Endothelial cell of umbilical vein (primary cell): ENCODE measurements at regions of chr20 and their contacts with region 1.

Region 1: GRCh38 chr20:45904583-45905504 is 7.1 kb downstream of the PLTP start:
- DNase-seq: no peak
- H3K4me3 ChIP-seq: no peak overlapping the region
- H3K27ac ChIP-seq: no peak overlapping the region
- H3K4me1 ChIP-seq: peaks cover under 1% of the 10 kb centered on the region
- H3K27me3 ChIP-seq: no peaks in the 10 kb centered on the region
- CTCF ChIP-seq: no peak
- POLR2A ChIP-seq: no peak

Region 2: GRCh38 chr20:45427236-45428149 is 477.4 kb before region 1 on chr20:
- CTCF ChIA-PET with region 1: no interaction called
- POLR2A ChIA-PET with region 1: no interaction called
- dilution Hi-C with region 1: no loop called
- intact Hi-C with region 1: no loop called
- DNase-seq: no peak
- H3K4me3 ChIP-seq: no peak overlapping the region
- H3K27ac ChIP-seq: no peak overlapping the region
- H3K4me1 ChIP-seq: peaks cover 3% of the 10 kb centered on the region
- H3K27me3 ChIP-seq: no peaks in the 10 kb centered on the region
- CTCF ChIP-seq: no peak
- POLR2A ChIP-seq: no peak

Region 3: GRCh38 chr20:45867819-45868176 is 37.0 kb before region 1 on chr20:
- CTCF ChIA-PET with region 1: no interaction called
- POLR2A ChIA-PET with region 1: no interaction called
- dilution Hi-C with region 1: no loop called
- intact Hi-C with region 1: no loop called
- DNase-seq: peak; percentile 17
- H3K4me3 ChIP-seq: no peak overlapping the region
- H3K27ac ChIP-seq: no peak overlapping the region
- H3K4me1 ChIP-seq: no peaks in the 10 kb centered on the region
- H3K27me3 ChIP-seq: no peaks in the 10 kb centered on the region
- CTCF ChIP-seq: no peak
- POLR2A ChIP-seq: no peak

Region 4: DNA sequence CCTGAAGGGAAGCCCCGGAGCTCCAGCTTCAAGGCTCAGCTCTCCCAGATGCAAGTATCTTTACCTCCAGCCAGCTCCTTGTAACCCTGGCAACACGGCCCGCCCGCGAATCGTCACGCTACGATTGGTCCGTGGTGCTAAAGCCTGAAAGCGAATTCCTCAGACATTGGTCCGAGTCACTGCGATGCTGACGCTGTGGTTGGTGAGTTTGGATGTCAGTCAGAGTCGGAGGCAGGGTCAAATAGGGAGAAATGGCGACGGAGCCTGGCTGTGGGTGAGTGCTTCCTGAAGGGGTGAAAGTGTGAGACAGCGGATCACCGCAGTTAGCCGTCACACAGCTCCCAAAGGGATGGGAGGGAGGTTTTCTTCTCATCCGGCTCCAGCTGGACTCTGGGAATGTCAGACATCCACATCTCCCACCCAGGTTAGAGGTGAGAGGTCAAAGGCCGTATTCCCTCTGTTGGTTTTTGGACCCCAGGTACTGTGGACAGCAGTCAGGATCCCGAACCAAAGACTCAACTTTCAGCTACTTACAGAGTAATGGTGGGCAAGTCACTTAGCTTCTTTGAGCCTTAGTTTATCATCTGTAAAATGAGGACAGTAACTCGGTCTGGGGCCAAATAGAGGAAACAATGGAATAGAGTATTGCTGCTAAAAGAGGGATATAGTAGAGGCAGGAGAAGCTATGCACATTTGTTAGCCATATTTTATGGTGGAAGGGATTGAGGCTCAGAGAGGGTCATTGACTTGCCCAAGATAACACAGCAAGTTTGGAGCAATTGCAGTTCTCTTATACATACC is 23.7 kb before region 1 on chr20 and contains the start of gene ZSWIM1:
- CTCF ChIA-PET with region 1: interaction called, 3 read pairs
- POLR2A ChIA-PET with region 1: interaction called, 11 read pairs
- dilution Hi-C with region 1: no loop called
- intact Hi-C with region 1: no loop called
- DNase-seq: peak; percentile 100
- H3K4me3 ChIP-seq: peak within 1 kb of the TSS; percentile 51 to 93 (median 89)
- H3K27ac ChIP-seq: peak within 1 kb of the TSS; percentile 66
- H3K4me1 ChIP-seq: peaks cover 11% of the 10 kb centered on the region
- H3K27me3 ChIP-seq: no peaks in the 10 kb centered on the region
- CTCF ChIP-seq: no peak
- POLR2A ChIP-seq: peak; percentile 95
- total RNA-seq, gene ZSWIM1: 10.0 and 11.3 TPM in 2 replicates

Region 5: DNA sequence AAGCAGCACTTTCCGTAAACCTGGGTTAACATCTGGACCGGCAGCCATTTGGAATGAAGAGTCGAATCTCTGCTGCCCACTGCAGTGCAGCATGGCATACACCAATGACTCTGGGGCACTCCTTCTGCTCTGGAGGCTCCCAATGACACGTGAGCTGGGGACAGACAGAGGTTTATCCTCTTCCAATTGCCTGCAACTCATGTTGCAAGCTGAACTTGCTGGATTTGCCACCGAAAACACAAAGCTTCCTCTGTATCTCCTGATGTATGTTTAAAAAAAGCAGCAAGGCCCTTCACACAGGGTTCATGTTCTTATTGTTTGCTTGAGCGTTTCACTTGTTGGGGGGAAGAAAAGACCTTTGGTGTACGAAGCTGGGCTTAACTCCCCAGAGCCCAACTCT is 174.1 kb after region 1 on chr20:
- CTCF ChIA-PET with region 1: no interaction called
- POLR2A ChIA-PET with region 1: no interaction called
- dilution Hi-C with region 1: no loop called
- intact Hi-C with region 1: no loop called
- DNase-seq: no peak
- H3K4me3 ChIP-seq: no peak overlapping the region
- H3K27ac ChIP-seq: no peak overlapping the region
- H3K4me1 ChIP-seq: no peaks in the 10 kb centered on the region
- H3K27me3 ChIP-seq: no peaks in the 10 kb centered on the region
- CTCF ChIP-seq: no peak
- POLR2A ChIP-seq: no peak

Region 6: DNA sequence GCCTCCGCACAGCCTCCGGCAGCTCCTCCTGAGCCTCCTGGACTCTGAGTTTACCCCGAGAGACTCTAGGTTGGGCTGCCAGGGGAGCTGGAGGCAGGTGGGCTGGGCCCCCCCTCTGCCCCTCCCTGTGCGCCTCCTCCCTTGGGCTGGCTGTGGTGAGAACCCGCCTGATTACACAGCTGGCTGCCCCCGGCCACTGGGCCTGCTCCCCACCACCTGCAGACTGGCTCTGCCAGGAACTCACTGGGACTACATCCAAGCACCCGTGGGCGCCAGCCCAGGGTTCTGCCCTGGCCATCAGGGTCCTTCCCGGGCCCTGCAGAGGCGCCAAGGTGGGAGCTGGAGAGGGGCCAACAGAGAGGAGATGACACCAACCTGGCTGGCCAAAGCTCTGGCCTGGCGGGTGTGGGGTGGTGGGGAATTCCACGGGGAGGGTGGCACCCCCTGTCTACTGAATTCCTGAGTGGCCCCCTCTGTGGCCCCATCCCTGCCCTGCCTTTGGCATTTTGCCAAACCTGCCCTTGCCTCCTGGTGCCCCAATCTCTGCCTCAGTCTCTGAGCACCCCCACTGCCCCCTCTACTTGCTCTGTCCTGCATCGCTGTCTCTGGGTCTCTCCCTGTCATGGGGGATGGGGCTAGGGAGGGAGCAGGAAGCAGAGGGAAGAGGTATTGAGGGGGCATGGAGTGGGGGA is 425.4 kb after region 1 on chr20:
- CTCF ChIA-PET with region 1: no interaction called
- POLR2A ChIA-PET with region 1: no interaction called
- dilution Hi-C with region 1: no loop called
- intact Hi-C with region 1: no loop called
- DNase-seq: no peak
- H3K4me3 ChIP-seq: no peak overlapping the region
- H3K27ac ChIP-seq: no peak overlapping the region
- H3K4me1 ChIP-seq: no peaks in the 10 kb centered on the region
- H3K27me3 ChIP-seq: peaks cover 7 to 10% of the 10 kb centered on the region in 2 experiments
- CTCF ChIP-seq: no peak
- POLR2A ChIP-seq: no peak